ENCODE measurements at regions of chr21 and their contacts with region 1.

Region 1: GRCh38 chr21:29499734-29500343 is 201.1 kb downstream of the BACH1 start:
- DNase-seq: peak; percentile 63 to 78
- H3K4me3 ChIP-seq: no peak overlapping the region
- H3K27ac ChIP-seq: no peak overlapping the region
- H3K4me1 ChIP-seq: no peaks in the 10 kb centered on the region
- H3K27me3 ChIP-seq: no peaks in the 10 kb centered on the region
- CTCF ChIP-seq: peak; percentile 82 to 93 (median 93)
- EP300 ChIP-seq: no peak
- POLR2A ChIP-seq: no peak
- RAD21 ChIP-seq: peak in 1 of 2 experiments; percentile 82

Region 2: GRCh38 chr21:29487154-29487553 is 12.7 kb before region 1 on chr21:
- CTCF ChIA-PET with region 1: interaction called, 11 read pairs
- POLR2A ChIA-PET with region 1: no interaction called
- DNase-seq: no peak
- H3K4me3 ChIP-seq: no peak overlapping the region
- H3K27ac ChIP-seq: no peak overlapping the region
- H3K4me1 ChIP-seq: peaks cover 3 to 5% (median 4%) of the 10 kb centered on the region in 4 experiments; a peak in 6 of 7 replicates
- H3K27me3 ChIP-seq: no peaks in the 10 kb centered on the region
- CTCF ChIP-seq: no peak
- EP300 ChIP-seq: no peak
- POLR2A ChIP-seq: no peak
- RAD21 ChIP-seq: no peak

Measured in H1 (cell line).